ENCODE measurements at regions of chr1 and their contacts with region 1.

Region 1: GRCh38 chr1:169809370-169810095 is 14.8 kb upstream of the METTL18 start:
- DNase-seq: peak; percentile 17 to 52 (median 43)
- ATAC-seq: peak; percentile 79
- H3K4me3 ChIP-seq: no peak overlapping the region
- H3K27ac ChIP-seq: no peak overlapping the region
- H3K4me1 ChIP-seq: no peaks in the 10 kb centered on the region
- H3K27me3 ChIP-seq: no peaks in the 10 kb centered on the region
- CTCF ChIP-seq: peak; percentile 29 to 72 (median 45); a peak in 4 of 6 replicates
- EP300 ChIP-seq: no peak
- POLR2A ChIP-seq: no peak
- RAD21 ChIP-seq: peak; percentile 62 to 67

Region 2: DNA sequence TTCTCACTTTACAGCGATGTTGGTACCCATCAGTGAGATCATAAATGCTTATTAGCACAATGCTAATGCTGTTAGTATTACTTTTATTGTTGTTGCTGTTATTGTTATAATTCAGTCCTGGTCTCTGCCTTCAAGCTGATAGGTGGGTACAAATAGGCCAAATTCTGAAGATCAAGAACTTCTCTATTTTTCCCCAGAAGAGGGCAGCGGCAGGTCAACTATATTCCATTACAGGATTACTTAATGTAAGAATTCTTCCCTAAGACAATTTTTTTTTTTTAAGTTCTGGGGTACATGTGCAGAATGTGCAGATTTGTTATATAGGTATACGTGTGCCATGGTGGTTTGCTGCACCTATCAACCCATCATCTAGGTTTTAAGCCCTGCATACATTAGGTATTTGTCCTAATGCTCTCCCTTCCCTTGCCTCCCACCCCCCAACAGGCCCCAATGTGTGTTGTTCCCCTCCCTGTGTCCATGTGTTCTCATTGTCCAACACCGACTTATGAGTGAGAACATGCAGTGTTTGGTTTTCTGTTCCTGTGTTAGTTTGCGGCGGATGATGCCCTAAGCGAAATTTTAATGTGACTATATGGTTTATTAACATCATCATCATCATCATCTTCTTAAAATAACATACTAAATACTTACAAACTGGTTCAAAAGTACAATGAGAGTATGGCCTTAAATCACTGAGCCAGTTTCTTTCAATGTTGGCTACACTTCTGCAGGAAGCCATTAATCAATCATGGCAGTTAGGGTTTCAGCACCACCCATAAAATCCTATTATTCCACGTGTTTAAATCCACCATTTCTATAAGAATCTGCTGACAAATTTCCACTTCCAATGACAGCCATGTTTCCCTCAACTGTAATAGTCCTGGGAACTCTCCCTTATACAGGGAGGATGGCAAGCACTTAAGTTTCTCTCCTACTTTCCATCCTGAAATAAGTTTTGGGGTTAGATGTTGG is 343.0 kb before region 1 on chr1:
- CTCF ChIA-PET with region 1: no interaction called
- POLR2A ChIA-PET with region 1: no interaction called
- in situ Hi-C with region 1: no loop called
- intact Hi-C with region 1: loop called (anchors 10 kb)
- DNase-seq: peak in 3 of 4 experiments; percentile 34 to 53 (median 42)
- ATAC-seq: peak; percentile 79
- H3K4me3 ChIP-seq: no peak overlapping the region
- H3K27ac ChIP-seq: no peak overlapping the region
- H3K4me1 ChIP-seq: no peaks in the 10 kb centered on the region
- H3K27me3 ChIP-seq: no peaks in the 10 kb centered on the region
- CTCF ChIP-seq: peak; percentile 39 to 66 (median 47); a peak in 5 of 6 replicates
- EP300 ChIP-seq: no peak
- POLR2A ChIP-seq: no peak
- RAD21 ChIP-seq: peak; percentile 70 to 79

Region 3: GRCh38 chr1:169586395-169587255 is 222.9 kb before region 1 on chr1 and contains the start of gene F5:
- CTCF ChIA-PET with region 1: no interaction called
- POLR2A ChIA-PET with region 1: interaction called, 3 read pairs
- in situ Hi-C with region 1: no loop called
- intact Hi-C with region 1: loop called (anchors 1 kb)
- DNase-seq: peak; percentile 17 to 64 (median 38)
- ATAC-seq: peak; percentile 99
- H3K4me3 ChIP-seq: no peak within 1 kb of the TSS
- H3K27ac ChIP-seq: no peak within 1 kb of the TSS
- H3K4me1 ChIP-seq: peaks cover 0 to 4% of the 10 kb centered on the region in 2 experiments; a peak in 1 of 5 replicates
- H3K27me3 ChIP-seq: peaks cover 4 to 9% of the 10 kb centered on the region in 2 experiments; a peak in 1 of 5 replicates
- CTCF ChIP-seq: peak; percentile 58 to 73 (median 64)
- EP300 ChIP-seq: no peak
- POLR2A ChIP-seq: no peak
- RAD21 ChIP-seq: peak; percentile 40 to 70; a peak in 3 of 4 replicates
- polyA plus RNA-seq, gene F5: not detected

Region 4: DNA sequence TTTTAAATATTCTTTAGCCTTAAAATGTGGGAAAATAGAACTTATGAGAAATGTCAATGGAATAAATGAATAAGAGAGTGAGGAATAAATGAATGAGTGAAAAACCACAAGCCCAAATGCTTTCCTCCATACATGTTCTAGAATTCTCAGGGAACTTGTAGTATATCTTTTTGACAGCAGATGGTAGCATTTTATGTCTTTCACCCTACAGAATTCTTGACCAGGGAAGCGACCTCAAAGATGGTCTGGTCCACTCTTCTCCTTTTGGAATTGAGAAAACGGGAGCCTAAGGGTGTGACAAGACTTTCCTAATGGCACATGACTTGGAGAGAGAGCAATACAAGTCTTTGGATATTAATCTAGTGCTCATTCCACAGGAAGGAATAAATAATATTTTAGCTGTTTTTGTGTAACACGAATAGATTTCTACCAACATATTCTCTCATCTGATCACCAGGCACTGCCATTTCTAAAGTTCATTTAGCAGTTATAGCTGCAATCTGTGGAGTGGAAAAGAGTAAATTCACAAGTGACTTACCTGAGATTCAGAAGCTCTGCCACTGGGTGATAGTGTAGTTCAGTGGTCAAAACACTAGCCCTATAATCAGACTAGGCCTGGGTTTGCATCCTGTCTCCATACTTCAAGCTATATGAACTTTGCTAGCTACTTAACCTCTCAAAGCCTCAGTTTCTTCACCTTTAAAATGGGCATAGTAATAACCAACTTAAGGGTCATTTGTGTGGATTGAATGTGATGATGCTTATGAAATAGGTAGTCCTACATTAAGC is 208.2 kb before region 1 on chr1:
- CTCF ChIA-PET with region 1: interaction called, 10 read pairs
- POLR2A ChIA-PET with region 1: interaction called, 3 read pairs
- in situ Hi-C with region 1: no loop called
- intact Hi-C with region 1: loop called (anchors 1 kb)
- DNase-seq: peak; percentile 17 to 23 (median 19)
- ATAC-seq: peak; percentile 70
- H3K4me3 ChIP-seq: no peak overlapping the region
- H3K27ac ChIP-seq: no peak overlapping the region
- H3K4me1 ChIP-seq: no peaks in the 10 kb centered on the region
- H3K27me3 ChIP-seq: no peaks in the 10 kb centered on the region
- CTCF ChIP-seq: peak in 2 of 3 experiments; percentile 28 to 59; a peak in 3 of 6 replicates
- EP300 ChIP-seq: no peak
- POLR2A ChIP-seq: no peak
- RAD21 ChIP-seq: peak; percentile 77 to 79

Measured in K562 (cell line).